ENCODE measurements at regions of chr11 and their contacts with region 1.

Region 1: DNA sequence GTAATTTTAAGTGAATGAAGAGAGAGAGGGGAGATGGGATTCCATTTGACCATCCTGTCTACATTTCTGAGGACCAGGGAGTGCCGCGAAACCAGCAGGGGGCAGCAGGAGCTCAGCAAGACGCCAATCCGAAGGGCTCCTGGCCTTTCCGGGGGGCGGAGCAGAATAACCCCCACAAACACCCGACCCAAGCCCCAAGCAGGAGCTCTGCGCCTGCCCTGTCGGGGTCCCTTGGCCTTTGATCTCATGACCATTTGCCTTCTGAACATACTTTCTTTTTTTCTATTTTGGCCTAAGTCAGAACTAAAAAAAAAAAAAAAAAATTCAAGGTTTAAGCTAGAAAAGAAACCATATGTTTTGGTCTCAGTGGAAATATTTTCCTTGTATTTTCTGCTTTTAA is 21.9 kb upstream of the SCN2B start:
- DNase-seq: peak; percentile 68
- H3K4me3 ChIP-seq: no peak overlapping the region
- H3K27ac ChIP-seq: no peak overlapping the region
- H3K4me1 ChIP-seq: no peaks in the 10 kb centered on the region
- H3K27me3 ChIP-seq: no peaks in the 10 kb centered on the region
- CTCF ChIP-seq: peak; percentile 96

Region 2: GRCh38 chr11:117919781-117920221 is 278.6 kb before region 1 on chr11:
- CTCF ChIA-PET with region 1: no interaction called
- POLR2A ChIA-PET with region 1: no interaction called
- intact Hi-C with region 1: no loop called
- DNase-seq: no peak
- H3K4me3 ChIP-seq: no peak overlapping the region
- H3K27ac ChIP-seq: no peak overlapping the region
- H3K4me1 ChIP-seq: no peaks in the 10 kb centered on the region
- H3K27me3 ChIP-seq: no peaks in the 10 kb centered on the region
- CTCF ChIP-seq: no peak

Region 3: DNA sequence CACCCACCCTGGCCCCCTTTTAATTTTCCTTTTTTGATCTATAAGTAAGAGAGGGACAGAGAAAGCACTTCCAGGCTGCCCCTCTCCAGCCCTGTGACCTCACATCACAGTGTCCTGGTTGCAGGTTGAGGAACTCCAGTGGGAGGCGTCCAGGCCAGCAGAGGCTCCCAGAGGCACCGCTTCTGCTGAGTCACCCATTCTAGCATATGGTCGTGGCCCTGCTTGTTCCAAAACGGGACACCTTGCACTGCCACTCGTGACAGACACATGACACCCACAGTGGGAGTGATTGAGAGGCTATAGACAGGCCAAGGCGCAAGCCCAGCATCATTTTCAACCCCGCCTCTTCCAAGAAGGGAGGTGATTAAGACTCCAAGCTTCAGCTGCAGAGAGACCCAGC is 137.5 kb before region 1 on chr11:
- CTCF ChIA-PET with region 1: no interaction called
- POLR2A ChIA-PET with region 1: no interaction called
- intact Hi-C with region 1: no loop called
- DNase-seq: no peak
- H3K4me3 ChIP-seq: no peak overlapping the region
- H3K27ac ChIP-seq: no peak overlapping the region
- H3K4me1 ChIP-seq: no peaks in the 10 kb centered on the region
- H3K27me3 ChIP-seq: peaks cover 23% of the 10 kb centered on the region
- CTCF ChIP-seq: no peak

Region 4: GRCh38 chr11:118359295-118359958 is 161.1 kb after region 1 on chr11 and contains the start of gene UBE4A:
- CTCF ChIA-PET with region 1: interaction called, 7 read pairs
- POLR2A ChIA-PET with region 1: no interaction called
- intact Hi-C with region 1: loop called (anchors 2 kb)
- DNase-seq: peak; percentile 97
- H3K4me3 ChIP-seq: peak within 1 kb of the TSS; percentile 84
- H3K27ac ChIP-seq: peak within 1 kb of the TSS; percentile 74
- H3K4me1 ChIP-seq: peaks cover 8% of the 10 kb centered on the region
- H3K27me3 ChIP-seq: no peaks in the 10 kb centered on the region
- CTCF ChIP-seq: no peak
- total RNA-seq, gene UBE4A: 52.0 and 54.2 TPM in 2 replicates

Region 5: GRCh38 chr11:118565051-118565450 is 366.7 kb after region 1 on chr11:
- CTCF ChIA-PET with region 1: no interaction called
- POLR2A ChIA-PET with region 1: no interaction called
- intact Hi-C with region 1: loop called (anchors 1 kb)
- DNase-seq: no peak
- H3K4me3 ChIP-seq: peak overlapping the region; percentile 32
- H3K27ac ChIP-seq: no peak overlapping the region
- H3K4me1 ChIP-seq: no peaks in the 10 kb centered on the region
- H3K27me3 ChIP-seq: no peaks in the 10 kb centered on the region
- CTCF ChIP-seq: no peak